MCF 10A (cell line): ENCODE measurements at regions of chr2 and their contacts with region 1.

Region 1: DNA sequence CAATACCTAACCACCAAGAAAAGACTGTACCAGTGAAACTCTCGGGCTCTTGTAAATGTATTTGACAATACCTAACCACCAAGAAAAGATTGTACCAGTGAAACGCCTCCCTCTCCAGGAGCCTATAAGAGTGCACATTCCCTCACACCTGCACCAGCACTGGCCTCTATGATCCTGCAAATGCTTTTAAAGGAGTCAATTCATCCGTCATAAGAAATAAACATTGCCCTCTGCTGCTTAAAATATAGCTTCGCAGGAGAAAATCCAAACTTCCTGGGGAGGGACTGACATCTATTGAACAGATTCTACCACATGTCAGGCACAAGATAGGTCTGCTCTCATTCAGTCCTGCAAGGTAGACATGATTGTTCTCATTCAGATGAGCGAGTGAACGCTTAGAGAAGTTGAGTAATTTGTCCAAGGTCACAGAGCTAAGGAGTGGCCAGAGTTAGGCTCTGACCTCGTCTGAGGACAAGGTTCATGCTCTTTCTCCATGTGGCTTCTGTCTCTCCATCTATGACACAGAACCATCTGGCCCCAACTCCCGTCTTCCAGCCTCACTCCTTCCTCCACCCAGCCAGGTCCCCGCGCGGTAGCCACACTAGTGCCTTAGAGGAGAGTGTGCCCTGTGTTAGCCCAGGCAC is 38.7 kb downstream of the MCFD2 start:
- DNase-seq: peak; percentile 84
- H3K4me3 Mint-ChIP-seq: no peak overlapping the region
- H3K27ac Mint-ChIP-seq: no peak overlapping the region
- H3K4me1 Mint-ChIP-seq: peaks cover 9% of the 10 kb centered on the region
- H3K27me3 Mint-ChIP-seq: no peaks in the 10 kb centered on the region
- CTCF ChIP-seq: peak; percentile 68

Region 2: GRCh38 chr2:46632349-46632748 is 244.5 kb before region 1 on chr2:
- CTCF ChIA-PET with region 1: interaction called, 6 read pairs
- POLR2A ChIA-PET with region 1: no interaction called
- intact Hi-C with region 1: loop called (anchors 1 kb)
- DNase-seq: peak; percentile 68
- H3K4me3 Mint-ChIP-seq: no peak overlapping the region
- H3K27ac Mint-ChIP-seq: no peak overlapping the region
- H3K4me1 Mint-ChIP-seq: no peaks in the 10 kb centered on the region
- H3K27me3 Mint-ChIP-seq: no peaks in the 10 kb centered on the region
- CTCF ChIP-seq: peak; percentile 56

Region 3: GRCh38 chr2:46657042-46657504 is 219.8 kb before region 1 on chr2:
- CTCF ChIA-PET with region 1: interaction called, 24 read pairs
- POLR2A ChIA-PET with region 1: interaction called, 25 read pairs
- intact Hi-C with region 1: no loop called
- DNase-seq: peak; percentile 44
- H3K4me3 Mint-ChIP-seq: no peak overlapping the region
- H3K27ac Mint-ChIP-seq: no peak overlapping the region
- H3K4me1 Mint-ChIP-seq: peaks cover 11% of the 10 kb centered on the region
- H3K27me3 Mint-ChIP-seq: no peaks in the 10 kb centered on the region
- CTCF ChIP-seq: peak; percentile 21

Region 4: GRCh38 chr2:46803911-46804670 is 72.8 kb before region 1 on chr2:
- CTCF ChIA-PET with region 1: interaction called, 5 read pairs
- POLR2A ChIA-PET with region 1: interaction called, 5 read pairs
- intact Hi-C with region 1: loop called (anchors 1 kb)
- DNase-seq: peak; percentile 73
- H3K4me3 Mint-ChIP-seq: no peak overlapping the region
- H3K27ac Mint-ChIP-seq: peak overlapping the region; percentile 74
- H3K4me1 Mint-ChIP-seq: peaks cover 32% of the 10 kb centered on the region
- H3K27me3 Mint-ChIP-seq: no peaks in the 10 kb centered on the region
- CTCF ChIP-seq: no peak

Region 5: GRCh38 chr2:46857893-46858701 is 18.8 kb before region 1 on chr2:
- CTCF ChIA-PET with region 1: interaction called, 8 read pairs
- POLR2A ChIA-PET with region 1: interaction called, 14 read pairs
- intact Hi-C with region 1: loop called (anchors 1 kb)
- DNase-seq: no peak
- H3K4me3 Mint-ChIP-seq: no peak overlapping the region
- H3K27ac Mint-ChIP-seq: peak overlapping the region; percentile 64
- H3K4me1 Mint-ChIP-seq: peaks cover 36% of the 10 kb centered on the region
- H3K27me3 Mint-ChIP-seq: no peaks in the 10 kb centered on the region
- CTCF ChIP-seq: no peak

Region 6: DNA sequence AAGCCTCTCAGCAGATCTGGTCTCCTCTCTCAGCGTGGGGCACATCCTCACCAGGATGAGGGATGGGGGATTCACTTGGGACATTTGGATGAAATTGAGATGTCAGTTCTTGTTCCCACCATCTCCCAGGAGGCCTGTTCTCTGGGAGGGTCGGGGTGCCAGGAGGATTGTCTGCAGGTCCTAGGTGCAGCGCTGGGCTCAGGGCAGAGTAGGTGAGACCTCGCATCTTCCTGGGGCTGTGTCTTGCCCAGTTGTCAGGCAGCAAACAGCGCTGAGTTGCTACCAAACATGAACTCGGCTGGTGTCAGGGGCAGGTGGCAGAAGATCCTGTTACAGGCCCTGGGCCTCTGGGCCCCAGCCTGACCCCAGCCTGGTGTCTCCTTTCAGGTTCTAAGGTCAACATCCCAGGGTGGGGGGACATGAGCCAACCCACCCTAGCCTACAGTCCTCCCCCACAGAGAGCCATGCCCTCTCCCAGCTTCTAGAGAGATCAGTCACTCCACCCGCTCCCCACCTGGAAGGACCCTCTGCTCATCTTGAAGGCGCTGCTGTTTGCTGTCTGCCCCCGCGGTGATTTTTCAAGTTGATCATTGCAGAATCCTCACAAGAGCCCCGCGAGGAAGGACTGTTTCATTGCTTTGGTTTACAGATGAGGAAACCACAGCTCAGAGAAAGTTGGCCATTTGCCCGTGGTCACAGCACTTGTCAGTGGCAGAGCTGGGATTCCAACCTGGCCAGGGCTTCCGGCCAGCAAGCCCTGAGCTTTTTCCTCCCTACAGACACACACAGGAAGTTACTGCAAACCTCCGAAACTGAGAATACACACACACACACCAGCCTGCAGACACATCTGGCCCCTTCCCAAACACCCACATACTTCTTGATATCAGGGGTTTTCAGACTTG is 194.3 kb after region 1 on chr2:
- CTCF ChIA-PET with region 1: no interaction called
- POLR2A ChIA-PET with region 1: no interaction called
- intact Hi-C with region 1: no loop called
- DNase-seq: peak; percentile 73
- H3K4me3 Mint-ChIP-seq: no peak overlapping the region
- H3K27ac Mint-ChIP-seq: no peak overlapping the region
- H3K4me1 Mint-ChIP-seq: peaks cover 13% of the 10 kb centered on the region
- H3K27me3 Mint-ChIP-seq: no peaks in the 10 kb centered on the region
- CTCF ChIP-seq: no peak